BJ (cell line): ENCODE measurements at regions of chr9 and their contacts with region 1.

Region 1: DNA sequence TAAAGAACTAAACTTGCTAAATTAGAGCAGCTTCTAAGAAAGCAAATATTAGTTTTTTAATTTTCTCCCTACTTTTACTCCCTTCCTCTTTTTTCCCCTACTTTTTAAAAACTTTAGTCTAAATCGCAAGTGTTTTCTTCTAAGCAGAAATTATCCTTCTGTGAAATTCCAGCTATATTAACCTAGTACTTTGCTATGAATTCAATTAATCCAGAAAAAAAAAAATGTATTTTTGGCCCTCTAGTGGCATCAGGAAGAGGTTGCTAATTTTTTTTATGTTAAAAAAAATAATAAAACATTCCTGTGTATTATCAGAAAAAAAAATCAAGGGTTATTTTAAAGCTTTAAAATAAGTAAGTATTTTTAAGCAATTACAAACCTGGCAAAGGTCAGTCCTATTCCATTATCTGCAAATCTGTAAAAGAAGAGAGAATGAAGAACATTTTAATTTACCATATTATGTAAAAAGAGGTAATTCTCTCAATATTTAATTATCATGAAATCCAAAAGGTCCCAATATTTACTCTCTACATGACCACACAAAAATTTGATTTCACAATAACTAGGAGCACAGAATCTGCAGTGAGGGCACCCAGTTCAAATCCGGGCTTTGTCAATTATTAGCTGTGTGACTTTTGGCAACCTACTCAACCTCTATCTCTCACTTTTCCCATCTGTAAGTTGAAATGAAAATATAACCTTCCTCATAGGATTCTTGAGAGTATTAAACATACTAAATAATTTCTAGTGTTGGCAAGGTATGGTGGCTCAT is 52.0 kb downstream of the CEMIP2 start:
- DNase-seq: no peak
- H3K4me3 ChIP-seq: no peak overlapping the region
- H3K27me3 ChIP-seq: no peaks in the 10 kb centered on the region
- CTCF ChIP-seq: peak; percentile 46

Region 2: DNA sequence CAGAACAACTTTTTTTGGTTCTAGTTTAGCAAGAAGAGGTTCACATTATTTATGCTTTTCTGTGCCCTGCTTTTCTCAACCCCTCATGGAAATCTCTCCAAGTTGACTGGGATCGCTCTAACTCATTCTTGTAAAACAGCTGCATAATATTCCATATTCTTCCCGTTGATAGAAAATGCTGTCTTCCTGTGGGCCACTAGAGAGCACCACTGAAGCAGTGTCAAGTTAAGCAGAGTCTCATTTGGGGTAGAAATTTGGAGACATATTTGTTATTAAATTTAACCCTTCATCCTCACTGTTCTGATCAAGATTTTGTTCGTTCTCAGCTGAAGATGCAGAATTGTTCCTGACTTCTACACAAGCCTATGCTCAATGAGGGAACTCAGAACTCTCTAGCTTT is 88.1 kb before region 1 on chr9:
- CTCF ChIA-PET with region 1: no interaction called
- POLR2A ChIA-PET with region 1: interaction called, 17 read pairs
- DNase-seq: no peak
- H3K4me3 ChIP-seq: no peak overlapping the region
- H3K27me3 ChIP-seq: peaks cover 2% of the 10 kb centered on the region; the same call in 1 of the 2 replicates
- CTCF ChIP-seq: peak; percentile 32

Region 3: DNA sequence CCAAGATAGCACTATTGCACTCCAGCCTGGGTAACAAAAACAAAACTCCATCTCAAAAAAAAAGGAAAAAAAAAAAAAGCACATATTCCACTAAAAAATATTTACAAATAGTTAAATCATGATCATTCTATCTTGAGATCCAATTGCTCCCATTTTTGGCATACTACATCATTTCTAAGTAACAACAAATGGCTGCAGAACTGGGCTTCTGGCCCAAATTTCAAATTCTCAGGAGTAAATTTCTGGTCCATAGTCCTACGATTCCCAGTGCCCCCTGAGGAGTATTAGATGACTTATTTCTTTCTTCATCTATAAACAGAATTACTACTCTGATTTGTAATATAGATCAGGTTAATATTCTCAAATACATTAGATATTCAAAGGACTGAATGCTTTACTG is 10.1 kb before region 1 on chr9:
- CTCF ChIA-PET with region 1: interaction called, 11 read pairs
- POLR2A ChIA-PET with region 1: no interaction called
- DNase-seq: no peak
- H3K4me3 ChIP-seq: no peak overlapping the region
- H3K27me3 ChIP-seq: no peaks in the 10 kb centered on the region
- CTCF ChIP-seq: no peak